Adrenal gland (tissue), 19 donors: ENCODE measurements at regions of chr9 and their contacts with region 1.

Region 1: DNA sequence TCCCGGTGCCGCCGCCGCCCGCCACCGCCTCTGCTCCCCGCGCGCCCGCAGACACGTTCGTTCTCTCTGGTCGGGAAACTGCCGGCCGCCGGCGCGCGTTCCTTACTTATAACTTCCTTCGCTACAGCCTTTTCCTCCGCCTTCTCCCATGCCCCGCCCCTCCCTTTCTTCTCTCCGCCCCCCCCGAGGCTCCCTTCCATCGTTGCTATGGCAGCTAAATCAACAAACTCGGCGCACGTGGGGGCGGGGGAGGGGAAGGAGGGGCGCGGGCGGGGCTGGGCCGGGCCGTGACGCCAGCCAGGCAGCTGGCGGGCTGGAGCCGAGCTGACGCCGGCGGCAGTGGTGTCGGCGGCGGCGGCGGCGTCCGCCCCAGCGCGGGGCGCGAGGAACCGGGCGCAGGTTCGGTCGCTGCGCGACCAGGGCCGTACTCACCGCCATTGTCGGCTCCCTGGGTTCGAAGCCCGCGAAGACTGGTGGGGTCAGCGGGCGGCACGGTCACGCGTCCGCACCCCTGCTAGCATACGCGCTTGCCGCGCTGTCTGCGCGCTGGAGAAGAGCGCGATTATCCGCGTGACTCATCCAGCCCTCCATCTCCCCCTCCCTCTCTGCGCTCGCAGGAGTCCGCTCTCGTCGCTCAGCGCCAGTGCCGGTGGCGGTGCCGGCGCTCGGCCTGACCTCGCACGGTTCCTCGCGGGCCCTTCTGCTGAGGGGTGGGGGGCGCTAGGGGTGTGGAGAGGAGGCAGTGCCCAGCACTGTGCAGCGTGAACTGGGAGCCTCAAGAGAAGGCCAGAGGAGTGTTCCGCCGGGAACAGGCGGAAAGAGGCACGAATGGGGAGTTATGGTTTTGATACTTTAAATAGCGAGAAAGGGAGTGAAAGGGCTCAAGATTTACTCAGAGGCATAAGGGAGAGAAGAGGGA is at the start of gene KLF4:
- DNase-seq: peak; percentile 92 to 96 (median 94)
- H3K4me3 ChIP-seq: peak within 1 kb of the TSS in 3 of 4 donors; percentile 26 to 84 (median 46)
- H3K27ac ChIP-seq: peak within 1 kb of the TSS; percentile 61 to 97 (median 86)
- H3K4me1 ChIP-seq: peaks cover 9 to 34% of the 10 kb centered on the region in 2 donors
- H3K27me3 ChIP-seq: no peaks in the 10 kb centered on the region
- CTCF ChIP-seq: peak in 1 of 6 experiments; percentile 15
- POLR2A ChIP-seq: peak; percentile 69 to 91
- total RNA-seq, gene KLF4: 3.3 to 58.3 (median 16.4) TPM

Region 2: GRCh38 chr9:107282753-107283625 is 207.0 kb before region 1 on chr9 and contains the start of gene RAD23B:
- intact Hi-C with region 1: no loop called
- DNase-seq: peak; percentile 99
- H3K4me3 ChIP-seq: peak within 1 kb of the TSS; percentile 82 to 100 (median 94)
- H3K27ac ChIP-seq: peak within 1 kb of the TSS; percentile 98 to 100 (median 99)
- H3K4me1 ChIP-seq: peaks cover 18 to 39% of the 10 kb centered on the region in 2 donors
- H3K27me3 ChIP-seq: no peaks in the 10 kb centered on the region
- CTCF ChIP-seq: no peak
- POLR2A ChIP-seq: peak; percentile 81 to 88
- total RNA-seq, gene RAD23B: 50.1 to 145 (median 76.7) TPM

Region 3: DNA sequence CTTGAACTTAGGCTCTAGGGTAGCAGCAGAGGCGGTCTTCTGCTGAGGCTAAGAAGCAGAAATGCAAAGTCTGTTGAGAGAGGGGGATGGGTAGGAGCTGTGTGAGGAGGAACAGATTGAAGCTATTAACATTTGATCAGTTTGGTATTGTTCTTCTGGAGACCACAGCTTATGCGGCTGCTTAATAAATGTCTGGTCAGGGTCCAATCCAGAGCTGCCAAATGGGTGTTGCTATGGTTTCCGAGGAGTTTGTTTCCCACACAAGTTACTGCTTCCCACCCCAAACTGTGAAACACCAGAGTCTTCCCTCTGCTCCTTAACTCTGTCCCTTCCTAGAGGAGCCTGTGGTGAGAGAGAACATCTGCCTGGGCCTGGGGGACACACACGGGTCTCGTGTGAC is 141.8 kb after region 1 on chr9:
- intact Hi-C with region 1: loop called (anchors 5 to 10 kb)
- DNase-seq: no peak
- H3K4me3 ChIP-seq: no peak overlapping the region
- H3K27ac ChIP-seq: no peak overlapping the region
- H3K4me1 ChIP-seq: peaks cover 0 to 4% of the 10 kb centered on the region in 2 donors
- H3K27me3 ChIP-seq: no peaks in the 10 kb centered on the region
- CTCF ChIP-seq: no peak
- POLR2A ChIP-seq: no peak

Region 4: GRCh38 chr9:107637421-107638420 is 147.8 kb after region 1 on chr9:
- intact Hi-C with region 1: loop called (anchors 5 to 10 kb)
- DNase-seq: peak; percentile 91 to 98 (median 97)
- H3K4me3 ChIP-seq: peak overlapping the region in 2 of 4 donors; percentile 38 to 64
- H3K27ac ChIP-seq: peak overlapping the region; percentile 71 to 100 (median 98)
- H3K4me1 ChIP-seq: peaks cover 0 to 16% of the 10 kb centered on the region in 2 donors
- H3K27me3 ChIP-seq: no peaks in the 10 kb centered on the region
- CTCF ChIP-seq: peak; percentile 10 to 62 (median 46)
- POLR2A ChIP-seq: peak; percentile 97 to 98

Region 5: GRCh38 chr9:107749787-107750444 is 260.0 kb after region 1 on chr9:
- intact Hi-C with region 1: loop called in 1 of 2 experiments (anchors 10 kb)
- DNase-seq: peak; percentile 85 to 98 (median 96)
- H3K4me3 ChIP-seq: no peak overlapping the region
- H3K27ac ChIP-seq: peak overlapping the region; percentile 79 to 96 (median 89)
- H3K4me1 ChIP-seq: peaks cover 27 to 43% of the 10 kb centered on the region in 2 donors
- H3K27me3 ChIP-seq: no peaks in the 10 kb centered on the region
- CTCF ChIP-seq: no peak
- POLR2A ChIP-seq: peak in 1 of 2 donors; percentile 87

Region 6: GRCh38 chr9:108272349-108272899 is 782.5 kb after region 1 on chr9:
- intact Hi-C with region 1: loop called in 1 of 2 experiments (anchors 5 kb)
- DNase-seq: peak; percentile 37 to 67 (median 52)
- H3K4me3 ChIP-seq: peak overlapping the region in 1 of 4 donors; percentile 16
- H3K27ac ChIP-seq: peak overlapping the region in 1 of 5 donors; percentile 9
- H3K4me1 ChIP-seq: no peaks in the 10 kb centered on the region
- H3K27me3 ChIP-seq: no peaks in the 10 kb centered on the region
- CTCF ChIP-seq: peak; percentile 51 to 67 (median 60)
- POLR2A ChIP-seq: no peak

Region 7: GRCh38 chr9:108439911-108440315 is 950.0 kb after region 1 on chr9:
- intact Hi-C with region 1: loop called in 1 of 2 experiments (anchors 10 kb)
- DNase-seq: no peak
- H3K4me3 ChIP-seq: no peak overlapping the region
- H3K27ac ChIP-seq: no peak overlapping the region
- H3K4me1 ChIP-seq: peaks cover 13% of the 10 kb centered on the region in 2 donors
- H3K27me3 ChIP-seq: peaks cover 5% of the 10 kb centered on the region
- CTCF ChIP-seq: no peak
- POLR2A ChIP-seq: no peak

Region 8: GRCh38 chr9:108565651-108566378 is 1075.9 kb after region 1 on chr9:
- intact Hi-C with region 1: loop called in 1 of 2 experiments (anchors 5 kb)
- DNase-seq: peak; percentile 51 to 77 (median 59)
- H3K4me3 ChIP-seq: no peak overlapping the region
- H3K27ac ChIP-seq: no peak overlapping the region
- H3K4me1 ChIP-seq: no peaks in the 10 kb centered on the region
- H3K27me3 ChIP-seq: peaks cover 6% of the 10 kb centered on the region
- CTCF ChIP-seq: peak; percentile 81 to 92 (median 86)
- POLR2A ChIP-seq: no peak